ENCODE measurements at regions of chr11 and their contacts with region 1.

Region 1: DNA sequence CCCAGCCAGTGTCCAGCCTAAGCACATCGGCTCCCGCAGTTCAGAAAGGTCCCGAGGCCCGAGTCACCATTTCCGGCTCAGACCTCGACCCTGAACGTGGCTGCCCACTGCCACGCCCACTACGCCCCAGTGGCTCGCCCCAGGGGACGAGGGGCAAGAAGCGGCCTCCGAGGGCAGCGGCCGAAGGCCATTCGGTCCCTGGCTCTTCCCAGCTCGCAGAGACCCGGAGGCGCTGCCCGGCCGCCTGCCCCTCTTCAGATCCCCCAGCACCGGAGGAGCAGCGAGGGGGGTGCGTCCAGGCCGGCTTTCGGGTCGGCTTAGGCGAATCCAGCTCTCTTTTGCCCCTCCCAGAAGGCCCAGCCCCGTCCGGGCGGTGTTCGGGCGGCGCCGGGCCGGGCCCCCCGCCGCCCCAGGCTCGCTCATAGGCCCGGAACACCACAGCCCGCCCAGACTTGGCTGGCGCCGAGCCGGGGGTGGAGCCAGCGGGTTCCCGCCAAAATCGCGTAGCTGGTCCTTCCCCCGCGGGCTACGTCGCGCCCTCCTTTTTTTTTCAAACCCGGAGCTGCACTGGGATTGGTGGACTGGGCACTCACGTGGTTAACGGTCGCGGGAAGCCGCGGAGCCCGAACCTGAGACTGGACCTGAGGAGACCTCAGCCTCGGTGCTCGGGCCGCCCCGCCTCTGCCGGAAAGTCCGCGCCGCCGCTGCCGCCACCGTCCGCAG is at the start of gene WEE1:
- DNase-seq: peak; percentile 98 to 100 (median 99)
- ATAC-seq: peak; percentile 96 to 97
- H3K4me3 ChIP-seq: peak within 1 kb of the TSS; percentile 86
- H3K27ac ChIP-seq: peak within 1 kb of the TSS; percentile 96
- H3K4me1 ChIP-seq: peaks cover 5% of the 10 kb centered on the region
- H3K27me3 ChIP-seq: no peaks in the 10 kb centered on the region
- total RNA-seq, gene WEE1: 51.6 to 85.0 (median 60.4) TPM

Region 2: GRCh38 chr11:9473408-9473807 is 99.8 kb before region 1 on chr11:
- intact Hi-C with region 1: no loop called
- DNase-seq: no peak
- ATAC-seq: no peak
- H3K4me3 ChIP-seq: no peak overlapping the region
- H3K27ac ChIP-seq: no peak overlapping the region
- H3K4me1 ChIP-seq: no peaks in the 10 kb centered on the region
- H3K27me3 ChIP-seq: no peaks in the 10 kb centered on the region

Region 3: DNA sequence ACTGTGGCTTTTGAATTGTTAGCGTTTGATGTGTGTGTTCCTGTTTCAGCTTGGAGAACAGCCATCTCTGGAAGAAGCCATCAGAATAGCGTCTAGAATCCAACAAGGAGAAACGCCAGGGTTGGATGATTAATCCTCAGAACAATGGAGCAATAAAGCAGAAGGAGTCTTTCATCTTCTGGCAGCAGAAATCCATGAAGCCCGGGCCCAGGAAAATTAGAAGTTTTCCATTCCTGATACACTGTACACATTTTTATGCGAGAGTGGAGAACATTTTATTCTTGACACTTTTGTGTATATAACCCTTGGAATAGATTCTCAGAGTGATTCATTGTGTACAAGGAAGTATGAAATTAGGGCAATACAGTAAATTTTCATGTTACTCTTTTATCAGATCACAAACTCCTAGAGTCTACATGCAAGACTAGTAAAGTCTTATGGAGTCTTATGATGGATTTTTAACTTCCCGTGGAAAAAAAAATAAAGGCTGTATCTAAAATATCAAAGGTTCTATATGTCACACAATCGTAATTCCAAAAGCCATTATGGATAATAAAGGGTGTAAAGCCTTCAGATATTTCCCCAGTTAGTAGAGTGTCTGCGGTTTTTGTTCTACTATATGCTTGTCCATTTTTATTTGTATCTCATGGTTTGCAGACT is 45.6 kb before region 1 on chr11:
- intact Hi-C with region 1: loop called in 1 of 4 experiments (anchors 10 kb)
- DNase-seq: no peak
- ATAC-seq: peak; percentile 71 to 76
- H3K4me3 ChIP-seq: no peak overlapping the region
- H3K27ac ChIP-seq: peak overlapping the region; percentile 54
- H3K4me1 ChIP-seq: peaks cover 3% of the 10 kb centered on the region
- H3K27me3 ChIP-seq: no peaks in the 10 kb centered on the region

Region 4: GRCh38 chr11:9672288-9672916 is 99.2 kb after region 1 on chr11:
- intact Hi-C with region 1: no loop called
- DNase-seq: no peak
- ATAC-seq: no peak
- H3K4me3 ChIP-seq: no peak overlapping the region
- H3K27ac ChIP-seq: no peak overlapping the region
- H3K4me1 ChIP-seq: peaks cover 3% of the 10 kb centered on the region
- H3K27me3 ChIP-seq: no peaks in the 10 kb centered on the region

Measured in right cardiac atrium (tissue), 5 donors.